CD4-positive, alpha-beta T cell (primary cell): ENCODE measurements at regions of chr12 and their contacts with region 1.

Region 1: GRCh38 chr12:71663561-71664294 is at the start of gene ZFC3H1:
- DNase-seq: peak; percentile 80 to 99 (median 85)
- ATAC-seq: peak; percentile 77
- H3K4me3 ChIP-seq: peak within 1 kb of the TSS; percentile 91
- H3K4me3 Mint-ChIP-seq: peak within 1 kb of the TSS; percentile 99
- H3K27ac ChIP-seq: peak within 1 kb of the TSS; percentile 98
- H3K27ac Mint-ChIP-seq: peak within 1 kb of the TSS; percentile 97
- H3K4me1 ChIP-seq: peaks cover 17% of the 10 kb centered on the region
- H3K4me1 Mint-ChIP-seq: peaks cover 58% of the 10 kb centered on the region
- H3K27me3 ChIP-seq: no peaks in the 10 kb centered on the region
- H3K27me3 Mint-ChIP-seq: no peaks in the 10 kb centered on the region
- CTCF ChIP-seq: no peak
- total RNA-seq, gene ZFC3H1: 131 to 135 TPM

Region 2: GRCh38 chr12:70365648-70366518 is 1297.8 kb before region 1 on chr12 and contains the start of gene KCNMB4:
- CTCF ChIA-PET with region 1: no interaction called
- POLR2A ChIA-PET with region 1: no interaction called
- intact Hi-C with region 1: loop called in 1 of 2 experiments (anchors 10 kb)
- DNase-seq: peak; percentile 43 to 87 (median 64)
- ATAC-seq: peak; percentile 70
- H3K4me3 ChIP-seq: peak within 1 kb of the TSS; percentile 81
- H3K4me3 Mint-ChIP-seq: peak within 1 kb of the TSS; percentile 96
- H3K27ac ChIP-seq: peak within 1 kb of the TSS; percentile 18 to 36
- H3K27ac Mint-ChIP-seq: peak within 1 kb of the TSS; percentile 77
- H3K4me1 ChIP-seq: peaks cover 18% of the 10 kb centered on the region
- H3K4me1 Mint-ChIP-seq: peaks cover 33% of the 10 kb centered on the region
- H3K27me3 ChIP-seq: peaks cover 0 to 7% of the 10 kb centered on the region in 2 experiments
- H3K27me3 Mint-ChIP-seq: peaks cover 5% of the 10 kb centered on the region
- CTCF ChIP-seq: no peak
- total RNA-seq, gene KCNMB4: 0.53 to 0.71 TPM

Region 3: DNA sequence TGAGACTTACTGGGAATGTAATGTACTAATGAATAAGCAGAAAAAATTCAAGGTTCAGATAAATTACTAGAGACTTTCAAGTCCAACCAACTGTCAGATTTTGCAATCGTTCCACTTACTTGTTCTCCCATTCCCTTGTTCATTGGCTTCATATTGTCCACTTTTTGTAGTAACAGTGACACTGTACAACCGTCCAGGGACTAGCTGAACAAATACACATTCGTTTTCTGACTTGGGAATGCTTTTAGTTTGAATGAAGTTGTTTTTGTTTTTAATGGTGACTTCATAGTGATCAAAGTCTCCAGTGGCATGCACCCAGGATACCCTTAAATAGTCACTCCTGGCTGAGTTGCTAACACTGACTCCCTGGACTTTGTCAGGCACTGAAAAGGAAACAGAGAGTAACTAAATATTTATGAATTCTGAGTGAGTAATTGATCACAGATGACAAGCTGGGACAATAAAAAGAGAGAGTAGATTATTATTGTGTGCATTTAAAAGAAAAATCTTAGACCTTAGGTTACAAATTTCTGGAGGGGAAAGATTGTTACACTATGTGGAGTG is 1091.9 kb before region 1 on chr12:
- CTCF ChIA-PET with region 1: no interaction called
- POLR2A ChIA-PET with region 1: no interaction called
- intact Hi-C with region 1: no loop called
- DNase-seq: no peak
- ATAC-seq: no peak
- H3K4me3 ChIP-seq: no peak overlapping the region
- H3K4me3 Mint-ChIP-seq: no peak overlapping the region
- H3K27ac ChIP-seq: no peak overlapping the region
- H3K27ac Mint-ChIP-seq: no peak overlapping the region
- H3K4me1 ChIP-seq: no peaks in the 10 kb centered on the region
- H3K4me1 Mint-ChIP-seq: no peaks in the 10 kb centered on the region
- H3K27me3 ChIP-seq: peaks cover 0 to 3% of the 10 kb centered on the region in 2 experiments
- H3K27me3 Mint-ChIP-seq: no peaks in the 10 kb centered on the region
- CTCF ChIP-seq: no peak

Region 4: DNA sequence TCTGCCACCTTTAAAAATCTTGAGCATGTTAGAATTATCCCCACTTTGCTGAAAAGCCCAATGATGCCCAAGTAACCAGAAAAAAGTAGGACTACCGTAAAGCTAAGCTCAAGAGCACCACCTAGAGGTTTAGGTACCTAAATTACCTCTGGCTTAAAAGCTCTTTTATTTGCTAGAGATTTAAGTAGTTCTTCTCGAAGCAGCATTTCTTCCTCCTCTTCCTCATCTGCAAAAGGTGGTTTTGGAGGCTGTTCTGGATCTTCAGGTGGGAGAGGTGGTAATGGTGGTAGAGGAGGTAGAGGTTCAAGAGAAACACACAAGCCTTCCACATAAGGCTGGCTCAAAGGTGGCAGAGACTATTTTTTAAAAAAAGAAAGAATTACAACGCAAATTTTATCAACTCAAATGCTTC is 27.0 kb before region 1 on chr12:
- CTCF ChIA-PET with region 1: interaction called, 14 read pairs
- POLR2A ChIA-PET with region 1: interaction called, 19 read pairs
- intact Hi-C with region 1: no loop called
- DNase-seq: peak in 3 of 14 experiments; percentile 65 to 78 (median 77)
- ATAC-seq: peak; percentile 79
- H3K4me3 ChIP-seq: no peak overlapping the region
- H3K4me3 Mint-ChIP-seq: no peak overlapping the region
- H3K27ac ChIP-seq: no peak overlapping the region
- H3K27ac Mint-ChIP-seq: peak overlapping the region; percentile 5
- H3K4me1 ChIP-seq: no peaks in the 10 kb centered on the region
- H3K4me1 Mint-ChIP-seq: peaks cover 27% of the 10 kb centered on the region
- H3K27me3 ChIP-seq: no peaks in the 10 kb centered on the region
- H3K27me3 Mint-ChIP-seq: no peaks in the 10 kb centered on the region
- CTCF ChIP-seq: peak; percentile 89

Region 5: GRCh38 chr12:71649401-71649800 is 14.3 kb before region 1 on chr12:
- CTCF ChIA-PET with region 1: interaction called, 5 read pairs
- POLR2A ChIA-PET with region 1: interaction called, 28 read pairs
- intact Hi-C with region 1: no loop called
- DNase-seq: no peak
- ATAC-seq: no peak
- H3K4me3 ChIP-seq: no peak overlapping the region
- H3K4me3 Mint-ChIP-seq: peak overlapping the region; percentile 11
- H3K27ac ChIP-seq: no peak overlapping the region
- H3K27ac Mint-ChIP-seq: no peak overlapping the region
- H3K4me1 ChIP-seq: peaks cover 3% of the 10 kb centered on the region
- H3K4me1 Mint-ChIP-seq: peaks cover 37% of the 10 kb centered on the region
- H3K27me3 ChIP-seq: no peaks in the 10 kb centered on the region
- H3K27me3 Mint-ChIP-seq: no peaks in the 10 kb centered on the region
- CTCF ChIP-seq: no peak

Region 6: GRCh38 chr12:71719615-71720370 is 56.1 kb after region 1 on chr12:
- CTCF ChIA-PET with region 1: no interaction called
- POLR2A ChIA-PET with region 1: no interaction called
- intact Hi-C with region 1: no loop called
- DNase-seq: no peak
- ATAC-seq: no peak
- H3K4me3 ChIP-seq: no peak overlapping the region
- H3K4me3 Mint-ChIP-seq: no peak overlapping the region
- H3K27ac ChIP-seq: no peak overlapping the region
- H3K27ac Mint-ChIP-seq: no peak overlapping the region
- H3K4me1 ChIP-seq: no peaks in the 10 kb centered on the region
- H3K4me1 Mint-ChIP-seq: no peaks in the 10 kb centered on the region
- H3K27me3 ChIP-seq: no peaks in the 10 kb centered on the region
- H3K27me3 Mint-ChIP-seq: no peaks in the 10 kb centered on the region
- CTCF ChIP-seq: no peak

Region 7: GRCh38 chr12:71754461-71755145 is 90.9 kb after region 1 on chr12 and contains the start of gene RAB21:
- CTCF ChIA-PET with region 1: interaction called, 7 read pairs
- POLR2A ChIA-PET with region 1: interaction called, 58 read pairs
- intact Hi-C with region 1: loop called (anchors 2 kb)
- DNase-seq: peak; percentile 96 to 99 (median 98)
- ATAC-seq: peak; percentile 91
- H3K4me3 ChIP-seq: peak within 1 kb of the TSS; percentile 99
- H3K4me3 Mint-ChIP-seq: peak within 1 kb of the TSS; percentile 100
- H3K27ac ChIP-seq: peak within 1 kb of the TSS; percentile 84 to 97
- H3K27ac Mint-ChIP-seq: peak within 1 kb of the TSS; percentile 99
- H3K4me1 ChIP-seq: peaks cover 30% of the 10 kb centered on the region
- H3K4me1 Mint-ChIP-seq: peaks cover 46% of the 10 kb centered on the region
- H3K27me3 ChIP-seq: no peaks in the 10 kb centered on the region
- H3K27me3 Mint-ChIP-seq: peaks cover 26% of the 10 kb centered on the region
- CTCF ChIP-seq: peak; percentile 28
- total RNA-seq, gene RAB21: 106 to 108 TPM